Activated CD4-positive, alpha-beta T cell treated with anti-CD3 and anti-CD28 coated beads, Interleukin-2, amount 10 ng/mL, durations not matched to agents 24 days and 14 days (primary cell): ENCODE measurements at regions of chr7 and their contacts with region 1.

Region 1: DNA sequence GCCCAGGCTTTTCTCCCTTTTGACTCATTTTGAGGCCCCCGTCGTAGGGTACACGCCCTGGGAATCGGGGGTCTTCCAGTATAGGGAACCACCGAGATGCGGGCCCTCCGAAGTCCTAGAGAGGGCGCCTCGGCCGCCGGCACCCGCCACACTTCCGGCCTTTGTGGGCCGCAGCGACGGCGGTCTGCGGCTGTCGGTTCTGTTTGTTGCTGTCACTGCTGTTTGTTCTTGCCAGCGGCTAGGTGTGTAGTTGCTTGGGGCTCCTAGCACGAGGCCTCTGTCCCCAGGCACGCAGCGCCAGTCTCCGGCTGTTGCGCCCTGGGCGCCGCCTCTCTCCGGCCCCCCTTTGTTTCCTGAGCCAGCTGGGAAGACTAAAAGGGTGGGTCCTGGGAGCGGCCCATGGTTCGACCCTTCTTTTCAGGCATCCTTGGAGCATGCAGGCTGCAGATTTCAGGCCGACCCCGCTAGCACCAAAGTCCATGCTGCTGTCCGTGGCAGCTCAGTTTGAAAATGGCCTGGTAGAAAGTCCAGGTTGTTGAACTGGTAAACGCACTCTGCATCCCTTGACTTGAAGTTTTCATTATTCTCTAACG is 17.8 kb upstream of the ZKSCAN1 start:
- DNase-seq: peak; percentile 92
- H3K4me3 Mint-ChIP-seq: peak overlapping the region; percentile 81
- H3K27ac Mint-ChIP-seq: peak overlapping the region; percentile 89
- H3K4me1 Mint-ChIP-seq: peaks cover 12% of the 10 kb centered on the region
- H3K27me3 Mint-ChIP-seq: peaks cover 2% of the 10 kb centered on the region

Region 2: DNA sequence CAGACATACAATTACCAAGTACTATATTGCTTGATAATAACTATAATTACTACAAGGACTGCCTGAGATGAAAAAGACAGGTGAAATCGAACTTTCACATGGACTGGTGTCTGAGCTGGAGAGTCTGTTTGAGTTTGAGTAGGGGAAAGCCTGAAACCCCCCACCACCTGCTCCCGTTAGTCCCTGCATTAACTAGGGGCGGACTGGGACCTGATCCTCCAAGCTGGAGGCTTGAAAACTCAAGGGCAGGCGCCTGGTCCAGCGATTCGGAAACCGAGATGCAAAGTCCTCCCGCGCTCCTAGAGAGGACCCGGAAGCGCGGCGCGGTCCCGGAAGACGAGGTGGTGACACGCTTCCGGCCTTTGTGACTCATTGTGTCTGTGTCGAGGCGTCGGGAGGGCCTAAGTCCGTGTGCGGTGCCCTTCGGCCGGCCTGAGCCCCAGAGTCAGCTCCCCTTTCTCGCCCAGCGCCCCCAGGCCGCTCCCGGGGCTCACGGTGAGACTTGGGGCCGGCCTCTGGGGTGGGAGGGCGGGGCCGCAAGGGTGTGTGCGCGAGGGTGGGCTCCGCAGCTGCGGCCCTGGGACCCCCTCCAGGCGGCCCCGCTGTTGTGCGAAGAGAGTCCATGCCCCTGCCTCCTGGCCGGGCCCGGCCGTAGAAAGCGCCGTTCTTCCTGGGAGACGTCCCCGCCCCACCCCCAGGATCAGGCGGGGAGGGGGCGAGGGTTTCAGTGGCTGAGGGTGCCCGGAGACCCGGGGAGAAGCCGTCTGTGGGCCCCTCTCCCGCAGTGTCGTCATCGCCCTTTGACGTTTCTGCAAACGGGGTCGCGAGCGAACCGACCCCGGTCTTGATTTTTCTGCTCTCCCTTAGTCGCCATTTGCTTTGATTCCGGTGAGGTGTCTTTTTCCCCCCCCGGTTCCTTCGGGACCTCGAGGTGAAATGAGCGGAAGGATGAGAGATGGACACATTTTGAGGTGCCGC is 17.9 kb after region 1 on chr7 and contains the start of gene ZKSCAN1:
- intact Hi-C with region 1: loop called (anchors 1 kb)
- DNase-seq: peak; percentile 96
- H3K4me3 Mint-ChIP-seq: peak within 1 kb of the TSS; percentile 95
- H3K27ac Mint-ChIP-seq: peak within 1 kb of the TSS; percentile 94
- H3K4me1 Mint-ChIP-seq: peaks cover 31% of the 10 kb centered on the region
- H3K27me3 Mint-ChIP-seq: no peaks in the 10 kb centered on the region
- total RNA-seq, gene ZKSCAN1: 54.8 and 56.3 TPM in 2 replicates

Region 3: GRCh38 chr7:100190048-100190711 is 192.5 kb after region 1 on chr7:
- intact Hi-C with region 1: no loop called
- DNase-seq: no peak
- H3K4me3 Mint-ChIP-seq: no peak overlapping the region
- H3K27ac Mint-ChIP-seq: no peak overlapping the region
- H3K4me1 Mint-ChIP-seq: peaks cover 12% of the 10 kb centered on the region
- H3K27me3 Mint-ChIP-seq: no peaks in the 10 kb centered on the region